ENCODE measurements at regions of chr22 and their contacts with region 1.

Region 1: GRCh38 chr22:20116951-20117645 is at the start of gene TRMT2A:
- DNase-seq: peak; percentile 94
- H3K4me3 ChIP-seq: peak within 1 kb of the TSS; percentile 98
- H3K27ac ChIP-seq: peak within 1 kb of the TSS; percentile 75
- H3K27me3 ChIP-seq: no peaks in the 10 kb centered on the region
- CTCF ChIP-seq: no peak
- polyA plus RNA-seq, gene TRMT2A: 15.6 and 20.4 TPM in 2 replicates

Region 2: DNA sequence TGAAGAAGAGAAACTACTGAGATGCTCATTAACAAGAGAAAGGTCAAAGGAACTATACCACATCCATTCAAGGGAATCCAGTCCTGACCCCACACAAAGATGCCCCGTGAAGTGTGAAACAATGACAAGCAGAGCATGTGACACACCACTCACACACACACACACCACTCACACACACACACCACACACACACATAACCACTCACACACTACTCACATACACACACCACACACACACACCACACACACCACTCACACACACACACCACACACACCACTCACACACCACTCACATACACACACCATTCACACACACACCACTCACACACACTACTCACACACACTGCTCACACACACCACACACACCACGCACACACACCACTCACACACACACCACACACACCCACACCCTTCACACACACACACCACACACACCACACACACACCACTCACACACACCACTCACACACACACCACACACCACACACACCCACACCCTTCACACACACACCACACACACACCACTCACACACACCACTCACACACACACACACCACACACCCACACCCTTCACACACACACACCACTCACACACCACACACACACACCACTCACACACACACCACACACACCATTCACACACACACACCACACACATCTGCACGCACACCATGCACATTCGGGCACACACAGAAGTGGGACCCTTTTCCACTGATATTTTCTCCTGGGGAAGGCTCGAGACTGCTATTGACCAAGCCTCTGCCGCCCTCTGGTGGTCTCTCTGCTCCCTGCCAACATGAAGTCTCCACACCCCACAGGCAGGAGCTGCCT is 207.5 kb before region 1 on chr22:
- CTCF ChIA-PET with region 1: no interaction called
- POLR2A ChIA-PET with region 1: no interaction called
- DNase-seq: peak; percentile 48
- H3K4me3 ChIP-seq: no peak overlapping the region
- H3K27ac ChIP-seq: no peak overlapping the region
- H3K27me3 ChIP-seq: no peaks in the 10 kb centered on the region
- CTCF ChIP-seq: peak; percentile 90

Region 3: DNA sequence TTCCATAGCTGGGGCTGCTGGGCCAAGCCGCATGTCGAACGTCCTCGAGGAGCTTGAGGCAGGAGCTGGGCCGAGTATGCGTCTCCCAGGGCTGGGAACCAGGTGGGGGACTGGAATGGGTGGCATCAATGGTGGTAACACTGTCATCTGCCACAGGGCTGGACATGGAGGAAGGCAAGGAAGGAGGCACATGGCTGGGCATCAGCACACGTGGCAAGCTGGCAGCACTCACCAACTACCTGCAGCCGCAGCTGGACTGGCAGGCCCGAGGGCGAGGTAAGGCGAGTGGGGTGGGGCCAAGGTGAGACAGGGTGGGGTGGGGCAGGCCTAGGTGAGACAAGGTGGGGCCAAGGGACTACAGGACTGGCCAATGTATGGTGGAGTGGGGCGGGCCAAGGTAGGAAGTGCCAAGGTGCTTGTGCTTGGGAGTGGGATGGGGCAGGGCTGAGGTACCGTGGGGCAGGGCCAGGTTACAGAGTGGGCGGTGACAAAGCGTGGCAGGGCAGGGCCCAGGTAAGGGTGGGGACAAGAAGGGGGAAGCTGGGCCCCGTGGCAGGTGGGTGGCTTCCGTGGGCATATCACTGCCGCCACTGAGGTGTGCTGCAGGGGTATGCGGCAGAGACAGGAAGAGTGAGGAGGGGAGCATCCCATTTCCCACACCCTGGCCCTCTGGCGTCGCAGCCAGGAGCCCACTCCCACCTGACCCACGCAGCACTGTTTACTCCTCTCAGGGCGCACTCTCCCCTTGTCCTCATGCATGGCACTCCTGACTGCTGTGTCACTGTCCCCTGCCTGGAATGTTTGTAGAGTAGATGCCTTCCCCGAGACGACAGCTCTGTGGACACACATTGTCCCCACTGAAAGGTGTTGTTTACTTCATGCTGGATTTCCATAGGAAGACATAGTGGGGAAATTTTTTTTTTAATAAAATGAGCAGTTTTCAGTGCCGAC is 64.5 kb before region 1 on chr22:
- CTCF ChIA-PET with region 1: no interaction called
- POLR2A ChIA-PET with region 1: interaction called, 14 read pairs
- DNase-seq: no peak
- H3K4me3 ChIP-seq: no peak overlapping the region
- H3K27ac ChIP-seq: no peak overlapping the region
- H3K27me3 ChIP-seq: no peaks in the 10 kb centered on the region
- CTCF ChIP-seq: no peak

Region 4: DNA sequence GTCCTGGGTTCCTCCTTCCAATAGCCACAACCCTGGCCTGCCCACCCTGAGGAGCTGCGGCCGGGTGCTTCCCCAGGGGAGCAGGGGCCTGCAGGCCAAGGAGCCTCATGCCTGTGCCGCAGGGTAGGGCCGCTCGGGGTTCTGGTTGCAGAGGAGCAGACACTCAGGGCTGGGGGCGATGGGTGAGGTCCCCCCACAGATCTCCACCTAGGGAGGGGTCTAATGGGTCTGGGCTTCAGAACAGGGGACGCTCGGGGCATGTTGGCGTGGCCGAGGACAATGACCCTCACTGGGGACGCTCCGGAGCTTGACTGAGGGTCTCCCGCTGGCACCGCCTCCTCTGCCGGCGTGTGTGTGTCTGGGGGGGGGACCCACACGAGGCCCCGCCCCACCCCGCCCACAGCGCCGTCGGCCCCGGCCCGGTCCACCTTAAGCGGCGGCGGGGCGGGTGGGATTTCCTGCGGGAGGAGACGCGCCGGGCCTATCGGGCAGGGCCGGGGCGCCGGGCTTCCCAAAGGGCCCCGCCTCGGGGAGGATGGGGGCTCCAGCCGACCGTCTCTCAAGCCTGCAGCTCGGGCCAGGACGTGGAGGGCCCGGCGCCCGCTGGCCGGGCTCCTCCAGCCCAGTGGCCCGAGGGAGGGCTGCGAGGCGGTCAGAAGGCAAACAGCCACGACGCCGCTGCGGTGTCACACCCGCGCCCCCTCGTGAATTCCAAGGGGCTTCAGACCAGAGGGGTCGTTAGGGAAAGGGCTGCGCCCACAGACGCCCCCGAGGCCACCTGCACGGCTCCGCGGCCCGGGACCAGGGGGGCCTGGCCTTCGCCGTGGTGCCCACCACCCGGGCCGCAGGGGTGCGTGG is 13.9 kb after region 1 on chr22:
- CTCF ChIA-PET with region 1: no interaction called
- POLR2A ChIA-PET with region 1: interaction called, 12 read pairs
- DNase-seq: peak; percentile 15
- H3K4me3 ChIP-seq: peak overlapping the region; percentile 82
- H3K27ac ChIP-seq: peak overlapping the region; percentile 47
- H3K27me3 ChIP-seq: no peaks in the 10 kb centered on the region
- CTCF ChIP-seq: no peak

Measured in AG04450 (cell line).